Psoas muscle (tissue), 8 donors: ENCODE measurements at regions of chr7 and their contacts with region 1.

Region 1: GRCh38 chr7:101630591-101630990 is 1.5 kb upstream of the MYL10 start:
- DNase-seq: no peak
- ATAC-seq: no peak
- H3K4me3 ChIP-seq: no peak overlapping the region
- H3K27ac ChIP-seq: no peak overlapping the region
- H3K4me1 ChIP-seq: peaks cover 34% of the 10 kb centered on the region
- H3K27me3 ChIP-seq: no peaks in the 10 kb centered on the region
- CTCF ChIP-seq: no peak

Region 2: GRCh38 chr7:101299511-101300464 is 330.8 kb before region 1 on chr7:
- intact Hi-C with region 1: no loop called
- DNase-seq: no peak
- ATAC-seq: no peak
- H3K4me3 ChIP-seq: no peak overlapping the region
- H3K27ac ChIP-seq: no peak overlapping the region
- H3K4me1 ChIP-seq: no peaks in the 10 kb centered on the region
- H3K27me3 ChIP-seq: peaks cover 4 to 92% (median 32%) of the 10 kb centered on the region in 3 donors
- CTCF ChIP-seq: no peak

Region 3: DNA sequence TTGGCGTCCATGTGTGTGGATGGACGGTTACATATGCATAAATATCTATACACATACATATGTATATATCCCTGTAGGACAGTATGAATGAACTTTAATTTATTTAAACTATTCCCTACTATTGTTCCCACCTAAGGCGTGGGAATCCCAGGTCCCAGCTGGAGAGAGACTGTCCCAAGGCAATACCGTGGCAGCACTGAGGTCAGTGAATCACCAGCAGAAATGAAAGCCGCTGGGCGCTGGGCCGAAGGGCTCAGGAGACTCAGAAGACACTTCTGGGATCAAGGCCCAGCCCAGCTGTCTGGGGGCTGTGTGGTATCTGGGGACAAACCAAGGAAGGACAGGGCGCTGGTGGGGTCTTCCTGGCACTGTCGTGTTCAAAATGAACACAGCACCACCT is 48.1 kb after region 1 on chr7:
- intact Hi-C with region 1: loop called in 1 of 2 experiments (anchors 5 kb)
- DNase-seq: peak in 1 of 2 donors; percentile 27
- ATAC-seq: peak; percentile 25 to 67 (median 44)
- H3K4me3 ChIP-seq: no peak overlapping the region
- H3K27ac ChIP-seq: no peak overlapping the region
- H3K4me1 ChIP-seq: peaks cover 6% of the 10 kb centered on the region
- H3K27me3 ChIP-seq: no peaks in the 10 kb centered on the region
- CTCF ChIP-seq: no peak